ENCODE measurements at regions of chr11 and their contacts with region 1.

Region 1: DNA sequence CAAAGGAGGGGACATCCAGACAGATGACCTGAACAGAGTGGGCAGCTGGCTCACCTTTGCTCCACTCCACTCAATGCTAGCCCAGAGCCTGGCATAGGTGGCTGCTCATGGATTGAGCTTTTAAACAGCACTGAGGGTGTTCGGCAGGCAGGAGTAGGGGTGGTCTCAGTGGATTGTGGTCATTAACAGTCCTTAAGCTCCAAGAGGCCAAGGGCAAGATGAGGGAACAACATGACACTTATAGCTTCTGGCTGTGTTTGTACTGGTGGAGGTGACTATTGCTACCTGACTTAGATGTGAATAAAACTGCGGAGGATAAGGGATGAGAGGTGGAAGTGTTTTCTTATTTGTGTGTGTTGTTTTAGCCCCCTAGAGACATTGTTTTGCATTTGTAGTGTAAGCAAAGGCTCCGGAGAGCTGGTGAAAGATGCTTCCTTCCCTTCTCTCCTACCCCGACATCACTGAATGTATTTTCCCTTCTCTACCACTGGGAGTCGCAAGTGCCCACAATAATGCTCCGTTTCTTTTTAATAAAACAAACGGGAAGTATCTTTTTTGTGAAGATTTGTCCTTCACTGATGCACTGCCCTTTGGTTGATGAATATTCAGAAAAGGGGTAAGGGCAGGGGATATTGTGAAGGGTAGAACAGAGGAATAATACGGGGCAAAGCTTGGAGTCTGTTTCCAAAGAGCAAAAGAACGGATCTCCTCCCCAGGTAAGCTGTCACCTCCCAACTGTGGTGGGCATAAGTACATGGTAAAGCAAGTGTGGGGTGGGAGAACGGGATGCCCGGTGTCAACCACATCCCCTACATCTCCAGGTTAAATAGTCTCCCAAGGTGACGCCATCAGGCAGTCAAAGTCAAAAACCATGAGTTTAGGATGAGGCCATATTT is 27.5 kb upstream of the MTNR1B start:
- DNase-seq: peak in 1 of 3 donors; percentile 14
- ATAC-seq: peak; percentile 59
- H3K4me3 ChIP-seq: no peak overlapping the region
- H3K4me1 ChIP-seq: no peaks in the 10 kb centered on the region
- CTCF ChIP-seq: peak; percentile 41

Region 2: DNA sequence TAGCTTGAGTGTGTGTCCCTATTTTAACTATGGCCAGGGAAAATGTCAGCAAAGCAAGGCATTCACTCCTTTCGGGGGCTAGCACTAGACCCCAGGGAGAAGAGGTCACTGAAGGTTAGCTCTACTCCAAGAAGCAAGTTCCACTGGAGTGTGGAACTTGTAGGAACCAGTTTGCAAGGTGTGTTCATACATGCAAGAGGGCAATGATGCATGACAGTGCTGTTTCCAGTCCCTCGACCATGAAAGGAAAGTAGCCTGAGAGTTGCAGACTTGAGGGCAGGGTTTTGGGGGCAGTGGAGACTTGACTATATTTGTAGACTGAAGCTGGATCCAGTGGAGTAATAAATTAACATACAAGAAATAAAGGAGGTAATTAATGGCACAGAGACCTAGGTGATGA is 277.5 kb after region 1 on chr11:
- intact Hi-C with region 1: loop called in 1 of 2 experiments (anchors 5 kb)
- DNase-seq: no peak
- ATAC-seq: no peak
- H3K4me3 ChIP-seq: no peak overlapping the region
- H3K4me1 ChIP-seq: no peaks in the 10 kb centered on the region
- CTCF ChIP-seq: no peak